ENCODE measurements at regions of chr17 and their contacts with region 1.

Region 1: GRCh38 chr17:48351831-48352332 is 78.1 kb downstream of the SKAP1 start:
- DNase-seq: no peak

Region 2: DNA sequence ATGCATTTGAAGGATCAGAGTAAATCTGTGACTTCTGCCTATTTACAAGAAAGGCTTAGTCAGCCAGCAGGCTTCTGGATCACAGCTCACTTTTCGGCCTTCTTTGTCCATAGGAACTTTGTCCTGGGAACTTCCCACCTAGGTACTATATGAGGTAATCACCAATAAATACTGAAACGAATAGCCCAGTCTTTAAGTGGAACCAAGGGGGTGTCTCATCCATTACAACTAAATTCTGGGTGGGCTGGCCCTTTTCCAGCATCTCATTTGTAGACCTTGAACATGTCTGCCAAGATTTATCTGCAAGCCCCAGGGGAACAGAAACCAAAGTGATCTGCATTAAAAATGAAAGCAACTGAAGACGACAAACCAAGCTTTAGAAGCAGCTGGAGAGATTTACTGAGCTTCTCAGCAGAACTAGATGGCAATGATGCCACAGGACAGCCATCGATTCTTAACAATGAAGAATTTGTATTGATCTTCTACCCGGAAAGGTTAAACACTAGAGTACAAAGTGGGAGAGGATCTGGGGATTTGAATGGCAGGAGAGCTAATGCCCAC is 188.9 kb before region 1 on chr17:
- intact Hi-C with region 1: no loop called
- DNase-seq: no peak

Region 3: GRCh38 chr17:48330386-48330785 is 21.5 kb before region 1 on chr17:
- intact Hi-C with region 1: no loop called
- DNase-seq: no peak

Region 4: GRCh38 chr17:48463526-48463925 is 111.6 kb after region 1 on chr17:
- intact Hi-C with region 1: loop called in 1 of 2 experiments (anchors 10 kb)
- DNase-seq: no peak